CD4-positive, alpha-beta T cell (primary cell): ENCODE measurements at regions of chr1 and their contacts with region 1.

Region 1: GRCh38 chr1:226444901-226445300 is 37.0 kb upstream of the PARP1 start:
- DNase-seq: peak; percentile 37 to 89 (median 60)
- ATAC-seq: peak; percentile 99
- H3K4me3 ChIP-seq: no peak overlapping the region
- H3K4me3 Mint-ChIP-seq: peak overlapping the region; percentile 42
- H3K27ac ChIP-seq: peak overlapping the region in 1 of 2 donors; percentile 10
- H3K27ac Mint-ChIP-seq: peak overlapping the region; percentile 80
- H3K4me1 ChIP-seq: peaks cover 32% of the 10 kb centered on the region
- H3K4me1 Mint-ChIP-seq: peaks cover 35% of the 10 kb centered on the region
- H3K27me3 ChIP-seq: no peaks in the 10 kb centered on the region
- H3K27me3 Mint-ChIP-seq: no peaks in the 10 kb centered on the region
- CTCF ChIP-seq: peak; percentile 45

Region 2: DNA sequence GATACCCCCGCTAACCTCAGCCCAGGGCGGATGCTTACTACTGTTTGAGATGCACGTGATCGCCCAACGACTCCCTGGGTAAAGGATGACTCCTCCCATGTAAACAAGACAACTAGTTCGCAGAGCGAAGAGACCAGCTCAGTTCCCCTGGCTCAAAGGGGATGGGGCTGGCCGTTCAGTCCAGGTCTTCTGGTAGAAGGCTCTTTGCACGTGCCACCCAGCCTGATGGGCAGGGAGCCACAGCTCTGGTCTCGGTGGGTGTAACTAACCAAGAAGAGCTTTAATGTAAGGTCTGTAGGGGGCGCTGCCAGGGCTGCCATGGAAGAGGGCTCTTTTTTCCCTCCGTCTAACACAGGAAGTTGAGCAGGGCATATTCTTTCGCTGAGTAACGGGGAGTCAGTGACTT is 12.4 kb after region 1 on chr1:
- CTCF ChIA-PET with region 1: interaction called, 12 read pairs
- POLR2A ChIA-PET with region 1: interaction called, 6 read pairs
- intact Hi-C with region 1: no loop called
- DNase-seq: peak; percentile 17 to 73 (median 40)
- ATAC-seq: peak; percentile 89
- H3K4me3 ChIP-seq: peak overlapping the region; percentile 38
- H3K4me3 Mint-ChIP-seq: peak overlapping the region; percentile 88
- H3K27ac ChIP-seq: no peak overlapping the region
- H3K27ac Mint-ChIP-seq: peak overlapping the region; percentile 81
- H3K4me1 ChIP-seq: peaks cover 9% of the 10 kb centered on the region
- H3K4me1 Mint-ChIP-seq: peaks cover 14% of the 10 kb centered on the region
- H3K27me3 ChIP-seq: no peaks in the 10 kb centered on the region
- H3K27me3 Mint-ChIP-seq: no peaks in the 10 kb centered on the region
- CTCF ChIP-seq: peak; percentile 57